ENCODE measurements at regions of chr4 and their contacts with region 1.

Region 1: GRCh38 chr4:52028969-52029368 is 8.8 kb upstream of the LRRC66 start:
- DNase-seq: no peak
- H3K4me3 ChIP-seq: no peak overlapping the region
- H3K4me3 Mint-ChIP-seq: no peak overlapping the region
- H3K27ac ChIP-seq: no peak overlapping the region
- H3K27ac Mint-ChIP-seq: peak overlapping the region in 1 of 8 donors; percentile 39
- H3K4me1 ChIP-seq: no peaks in the 10 kb centered on the region
- H3K4me1 Mint-ChIP-seq: no peaks in the 10 kb centered on the region
- H3K27me3 ChIP-seq: no peaks in the 10 kb centered on the region
- H3K27me3 Mint-ChIP-seq: peaks cover 0 to 1% of the 10 kb centered on the region in 2 donors

Region 2: GRCh38 chr4:51831133-51831532 is 197.8 kb before region 1 on chr4:
- CTCF ChIA-PET with region 1: interaction called, 12 read pairs
- POLR2A ChIA-PET with region 1: interaction called, 5 read pairs
- DNase-seq: peak; percentile 37 to 77 (median 48)
- H3K4me3 ChIP-seq: no peak overlapping the region
- H3K4me3 Mint-ChIP-seq: no peak overlapping the region
- H3K27ac ChIP-seq: no peak overlapping the region
- H3K27ac Mint-ChIP-seq: no peak overlapping the region
- H3K4me1 ChIP-seq: no peaks in the 10 kb centered on the region
- H3K4me1 Mint-ChIP-seq: no peaks in the 10 kb centered on the region
- H3K27me3 ChIP-seq: no peaks in the 10 kb centered on the region
- H3K27me3 Mint-ChIP-seq: peaks cover 15 to 42% of the 10 kb centered on the region in 2 donors

Region 3: GRCh38 chr4:52001616-52002015 is 27.4 kb before region 1 on chr4:
- CTCF ChIA-PET with region 1: no interaction called
- POLR2A ChIA-PET with region 1: no interaction called
- DNase-seq: no peak
- H3K4me3 ChIP-seq: no peak overlapping the region
- H3K4me3 Mint-ChIP-seq: no peak overlapping the region
- H3K27ac ChIP-seq: no peak overlapping the region
- H3K27ac Mint-ChIP-seq: no peak overlapping the region
- H3K4me1 ChIP-seq: no peaks in the 10 kb centered on the region
- H3K4me1 Mint-ChIP-seq: no peaks in the 10 kb centered on the region
- H3K27me3 ChIP-seq: no peaks in the 10 kb centered on the region
- H3K27me3 Mint-ChIP-seq: peaks cover 0 to 2% of the 10 kb centered on the region in 2 donors

Region 4: DNA sequence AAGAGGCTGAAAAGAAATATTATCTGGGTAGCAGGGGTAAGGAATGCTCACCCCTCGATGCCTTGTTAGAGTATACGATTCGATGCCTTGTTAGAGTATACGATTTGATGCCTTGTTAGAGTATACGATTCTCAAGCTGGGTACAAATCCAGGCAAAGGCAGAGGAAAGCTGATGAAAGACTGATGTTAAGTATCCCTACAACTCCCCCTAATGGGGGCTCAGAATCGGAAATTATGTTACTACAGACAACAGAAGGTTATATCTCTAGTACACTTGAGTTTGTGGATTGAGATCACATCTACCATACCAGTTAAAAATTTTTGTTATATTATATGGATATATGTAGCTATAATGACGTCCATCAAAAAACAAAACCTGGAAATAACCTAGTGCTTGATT is 13.6 kb before region 1 on chr4:
- CTCF ChIA-PET with region 1: no interaction called
- POLR2A ChIA-PET with region 1: no interaction called
- DNase-seq: no peak
- H3K4me3 ChIP-seq: no peak overlapping the region
- H3K4me3 Mint-ChIP-seq: no peak overlapping the region
- H3K27ac ChIP-seq: no peak overlapping the region
- H3K27ac Mint-ChIP-seq: no peak overlapping the region
- H3K4me1 ChIP-seq: no peaks in the 10 kb centered on the region
- H3K4me1 Mint-ChIP-seq: no peaks in the 10 kb centered on the region
- H3K27me3 ChIP-seq: no peaks in the 10 kb centered on the region
- H3K27me3 Mint-ChIP-seq: no peaks in the 10 kb centered on the region

Region 5: DNA sequence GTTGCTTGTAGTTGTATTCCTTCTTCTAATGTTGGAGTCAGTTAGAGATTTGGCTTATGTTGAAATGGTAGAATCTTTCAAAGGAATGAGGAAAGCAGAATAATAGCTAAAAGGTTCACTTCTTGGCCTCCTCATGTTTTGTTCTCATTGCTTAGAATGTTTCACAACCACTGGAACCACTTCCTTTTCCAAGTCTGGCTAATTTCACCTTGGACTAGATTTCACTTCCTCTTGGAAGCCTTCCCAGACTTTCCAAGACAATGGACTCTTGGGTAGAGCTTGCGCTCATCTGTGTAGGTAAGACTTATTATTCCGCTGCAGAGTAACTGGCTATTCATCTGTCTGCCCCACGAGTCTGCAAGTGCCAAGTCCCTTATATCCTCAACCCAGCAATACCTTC is 30.4 kb after region 1 on chr4:
- CTCF ChIA-PET with region 1: no interaction called
- POLR2A ChIA-PET with region 1: no interaction called
- DNase-seq: no peak
- H3K4me3 ChIP-seq: no peak overlapping the region
- H3K4me3 Mint-ChIP-seq: no peak overlapping the region
- H3K27ac ChIP-seq: no peak overlapping the region
- H3K27ac Mint-ChIP-seq: no peak overlapping the region
- H3K4me1 ChIP-seq: no peaks in the 10 kb centered on the region
- H3K4me1 Mint-ChIP-seq: no peaks in the 10 kb centered on the region
- H3K27me3 ChIP-seq: no peaks in the 10 kb centered on the region
- H3K27me3 Mint-ChIP-seq: peaks cover 3 to 28% of the 10 kb centered on the region in 2 donors